ENCODE measurements at regions of chr10 and their contacts with region 1.

Region 1: GRCh38 chr10:89466599-89467035 is 52.2 kb downstream of the IFIT5 start:
- DNase-seq: no peak
- H3K4me3 ChIP-seq: no peak overlapping the region
- H3K27ac ChIP-seq: no peak overlapping the region
- H3K4me1 ChIP-seq: no peaks in the 10 kb centered on the region; a peak in 1 of 7 replicates
- H3K27me3 ChIP-seq: no peaks in the 10 kb centered on the region
- CTCF ChIP-seq: peak; percentile 55 to 71 (median 57)
- EP300 ChIP-seq: no peak
- POLR2A ChIP-seq: no peak
- RAD21 ChIP-seq: peak; percentile 75 to 76

Region 2: GRCh38 chr10:89426230-89426868 is 40.3 kb before region 1 on chr10:
- CTCF ChIA-PET with region 1: interaction called, 10 read pairs
- POLR2A ChIA-PET with region 1: no interaction called
- DNase-seq: no peak
- H3K4me3 ChIP-seq: no peak overlapping the region
- H3K27ac ChIP-seq: no peak overlapping the region
- H3K4me1 ChIP-seq: peaks cover 0 to 13% (median 5%) of the 10 kb centered on the region in 4 experiments; a peak in 2 of 7 replicates
- H3K27me3 ChIP-seq: no peaks in the 10 kb centered on the region
- CTCF ChIP-seq: peak in 2 of 3 experiments; percentile 68 to 78; a peak in 2 of 4 replicates
- EP300 ChIP-seq: no peak
- POLR2A ChIP-seq: no peak
- RAD21 ChIP-seq: peak; percentile 91 to 92

Region 3: GRCh38 chr10:89450901-89451300 is 15.7 kb before region 1 on chr10:
- CTCF ChIA-PET with region 1: interaction called, 22 read pairs
- POLR2A ChIA-PET with region 1: no interaction called
- DNase-seq: no peak
- H3K4me3 ChIP-seq: no peak overlapping the region
- H3K27ac ChIP-seq: no peak overlapping the region
- H3K4me1 ChIP-seq: no peaks in the 10 kb centered on the region
- H3K27me3 ChIP-seq: no peaks in the 10 kb centered on the region
- CTCF ChIP-seq: no peak
- EP300 ChIP-seq: no peak
- POLR2A ChIP-seq: no peak
- RAD21 ChIP-seq: no peak

Region 4: GRCh38 chr10:89481662-89482061 is 15.0 kb after region 1 on chr10:
- CTCF ChIA-PET with region 1: interaction called, 11 read pairs
- POLR2A ChIA-PET with region 1: no interaction called
- DNase-seq: no peak
- H3K4me3 ChIP-seq: no peak overlapping the region
- H3K27ac ChIP-seq: no peak overlapping the region
- H3K4me1 ChIP-seq: peaks cover 0 to 11% (median 3%) of the 10 kb centered on the region in 4 experiments; a peak in 5 of 7 replicates
- H3K27me3 ChIP-seq: no peaks in the 10 kb centered on the region
- CTCF ChIP-seq: no peak
- EP300 ChIP-seq: no peak
- POLR2A ChIP-seq: no peak
- RAD21 ChIP-seq: no peak

Region 5: GRCh38 chr10:89535171-89536012 is 68.8 kb after region 1 on chr10 and contains the start of gene SLC16A12:
- CTCF ChIA-PET with region 1: interaction called, 20 read pairs
- POLR2A ChIA-PET with region 1: interaction called, 3 read pairs
- DNase-seq: peak; percentile 27 to 80
- H3K4me3 ChIP-seq: peak within 1 kb of the TSS; percentile 35 to 64 (median 54)
- H3K27ac ChIP-seq: no peak within 1 kb of the TSS
- H3K4me1 ChIP-seq: peaks cover 0 to 10% (median 7%) of the 10 kb centered on the region in 4 experiments; a peak in 4 of 7 replicates
- H3K27me3 ChIP-seq: peaks cover 0 to 15% (median 5%) of the 10 kb centered on the region in 4 experiments; a peak in 4 of 7 replicates
- CTCF ChIP-seq: peak in 1 of 3 experiments; percentile 36; a peak in 1 of 4 replicates
- EP300 ChIP-seq: no peak
- POLR2A ChIP-seq: peak in 1 of 2 experiments; percentile 23; a peak in 1 of 3 replicates
- RAD21 ChIP-seq: peak in 1 of 2 experiments; percentile 7; a peak in 1 of 4 replicates
- total RNA-seq, gene SLC16A12: 1.6 and 2.0 TPM in 2 replicates

Region 6: DNA sequence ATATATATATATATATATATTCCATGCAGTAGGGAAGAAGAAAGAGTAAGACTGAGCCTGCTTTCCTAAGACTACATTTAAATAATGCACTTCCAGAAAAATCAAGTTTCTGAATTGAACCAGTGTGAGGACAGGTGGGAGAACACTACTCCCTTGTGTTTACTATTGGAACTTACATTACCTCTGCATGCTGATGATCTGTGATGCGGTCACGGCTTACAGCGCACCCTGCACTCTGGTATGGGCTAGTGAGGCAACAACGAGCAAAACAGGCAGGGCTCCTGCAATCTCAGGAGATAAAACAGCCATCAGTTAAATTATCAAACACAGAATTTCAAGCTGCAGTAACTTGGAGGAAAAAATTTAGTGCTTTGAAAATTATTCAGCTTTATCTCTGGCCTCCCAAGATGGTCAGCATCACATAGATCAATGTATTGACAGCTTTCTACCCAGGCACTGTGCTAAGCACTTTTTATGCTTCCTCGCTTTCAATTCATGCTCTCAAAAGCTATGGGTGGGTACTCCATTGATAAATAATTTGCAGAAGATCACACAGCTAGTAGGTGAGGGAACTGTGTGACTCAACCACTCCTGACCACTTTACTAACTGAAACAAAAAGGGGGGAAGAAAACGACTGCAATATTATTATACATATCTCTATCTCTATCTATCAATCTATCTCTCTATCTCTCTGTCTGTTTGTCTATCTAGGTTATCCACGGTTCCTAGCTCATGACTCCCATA is 89.3 kb after region 1 on chr10:
- CTCF ChIA-PET with region 1: interaction called, 16 read pairs
- POLR2A ChIA-PET with region 1: no interaction called
- DNase-seq: no peak
- H3K4me3 ChIP-seq: no peak overlapping the region
- H3K27ac ChIP-seq: no peak overlapping the region
- H3K4me1 ChIP-seq: peaks cover 0 to 4% (median 0%) of the 10 kb centered on the region in 4 experiments; a peak in 1 of 7 replicates
- H3K27me3 ChIP-seq: no peaks in the 10 kb centered on the region; a peak in 1 of 7 replicates
- CTCF ChIP-seq: peak; percentile 33 to 50 (median 49)
- EP300 ChIP-seq: no peak
- POLR2A ChIP-seq: no peak
- RAD21 ChIP-seq: peak; percentile 70

Region 7: DNA sequence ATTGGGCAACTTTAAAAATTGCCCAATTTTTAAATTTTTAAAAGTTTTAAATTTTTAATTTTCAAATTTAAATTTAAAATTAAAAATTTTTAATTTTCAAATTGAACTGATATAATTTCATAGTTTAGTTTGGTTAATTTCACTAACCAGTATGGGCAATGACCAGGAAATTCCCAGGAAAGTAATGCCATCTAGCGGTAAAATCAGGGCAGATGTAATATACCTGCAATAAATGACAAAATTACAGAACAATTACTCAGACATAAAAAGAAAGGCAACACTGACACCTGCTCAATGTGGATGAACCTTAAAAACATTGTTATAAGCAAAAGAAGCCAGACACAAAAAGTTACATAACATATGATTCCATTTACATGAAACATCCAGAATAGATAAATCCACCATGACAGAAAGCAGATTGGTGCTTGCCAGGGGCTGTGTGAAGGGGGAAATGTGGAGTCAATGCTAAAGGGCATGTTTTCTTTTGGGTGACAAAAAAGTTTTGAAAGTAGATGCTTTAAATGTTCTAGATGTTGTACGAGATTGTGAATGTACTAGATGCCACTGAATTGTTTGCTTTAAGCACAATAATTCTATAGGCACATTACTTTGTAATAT is 97.4 kb after region 1 on chr10:
- CTCF ChIA-PET with region 1: interaction called, 28 read pairs
- POLR2A ChIA-PET with region 1: no interaction called
- DNase-seq: no peak
- H3K4me3 ChIP-seq: no peak overlapping the region
- H3K27ac ChIP-seq: no peak overlapping the region
- H3K4me1 ChIP-seq: peaks cover 0 to 14% (median 5%) of the 10 kb centered on the region in 4 experiments; a peak in 3 of 7 replicates
- H3K27me3 ChIP-seq: no peaks in the 10 kb centered on the region; a peak in 1 of 7 replicates
- CTCF ChIP-seq: peak in 2 of 3 experiments; percentile 58; a peak in 2 of 4 replicates
- EP300 ChIP-seq: no peak
- POLR2A ChIP-seq: no peak
- RAD21 ChIP-seq: peak; percentile 82 to 88